Psoas muscle (tissue), 8 donors: ENCODE measurements at regions of chr12 and their contacts with region 1.

Region 1: DNA sequence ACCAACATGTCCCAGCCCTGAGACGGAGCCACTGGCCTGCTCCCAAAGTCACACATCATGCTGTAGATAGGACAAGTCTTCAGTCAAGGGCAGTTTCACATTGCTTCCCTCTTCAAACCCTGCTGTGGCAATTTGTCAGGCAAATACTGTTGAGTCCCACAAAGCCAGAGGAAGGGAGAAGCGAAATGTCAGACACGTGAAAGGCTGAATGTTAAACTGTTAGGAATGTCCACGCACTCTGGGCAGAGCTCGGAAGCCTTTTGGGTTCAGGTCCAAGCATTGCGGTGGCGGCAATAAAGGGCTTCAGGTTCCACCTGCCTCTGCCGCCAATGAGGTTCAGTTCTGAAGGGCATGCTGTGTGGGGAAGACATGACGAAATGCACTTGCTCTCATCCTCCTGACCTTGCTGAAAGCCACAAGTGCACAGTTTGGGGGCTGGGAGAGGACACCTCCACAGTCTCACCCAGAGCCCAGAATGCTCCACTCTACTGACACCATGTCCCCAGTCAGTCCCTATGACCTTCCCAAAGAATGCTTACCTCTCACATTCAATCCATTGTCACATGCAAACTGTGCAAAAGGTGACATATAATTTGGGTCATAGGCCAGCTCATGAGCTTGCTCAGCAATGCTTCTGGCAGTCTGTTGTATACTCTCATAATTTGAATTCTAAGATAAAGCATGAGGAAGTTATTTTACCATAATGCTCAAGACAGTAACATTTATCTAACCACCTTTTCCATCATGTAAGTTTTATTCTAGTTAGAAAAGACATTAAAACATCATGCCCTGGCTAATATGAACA is 35.7 kb downstream of the RAD9B start:
- DNase-seq: peak; percentile 68 to 93
- ATAC-seq: peak; percentile 85 to 88 (median 86)
- H3K4me3 ChIP-seq: peak overlapping the region; percentile 33
- H3K27ac ChIP-seq: peak overlapping the region; percentile 86
- H3K4me1 ChIP-seq: peaks cover 81% of the 10 kb centered on the region
- H3K27me3 ChIP-seq: no peaks in the 10 kb centered on the region
- CTCF ChIP-seq: no peak

Region 2: DNA sequence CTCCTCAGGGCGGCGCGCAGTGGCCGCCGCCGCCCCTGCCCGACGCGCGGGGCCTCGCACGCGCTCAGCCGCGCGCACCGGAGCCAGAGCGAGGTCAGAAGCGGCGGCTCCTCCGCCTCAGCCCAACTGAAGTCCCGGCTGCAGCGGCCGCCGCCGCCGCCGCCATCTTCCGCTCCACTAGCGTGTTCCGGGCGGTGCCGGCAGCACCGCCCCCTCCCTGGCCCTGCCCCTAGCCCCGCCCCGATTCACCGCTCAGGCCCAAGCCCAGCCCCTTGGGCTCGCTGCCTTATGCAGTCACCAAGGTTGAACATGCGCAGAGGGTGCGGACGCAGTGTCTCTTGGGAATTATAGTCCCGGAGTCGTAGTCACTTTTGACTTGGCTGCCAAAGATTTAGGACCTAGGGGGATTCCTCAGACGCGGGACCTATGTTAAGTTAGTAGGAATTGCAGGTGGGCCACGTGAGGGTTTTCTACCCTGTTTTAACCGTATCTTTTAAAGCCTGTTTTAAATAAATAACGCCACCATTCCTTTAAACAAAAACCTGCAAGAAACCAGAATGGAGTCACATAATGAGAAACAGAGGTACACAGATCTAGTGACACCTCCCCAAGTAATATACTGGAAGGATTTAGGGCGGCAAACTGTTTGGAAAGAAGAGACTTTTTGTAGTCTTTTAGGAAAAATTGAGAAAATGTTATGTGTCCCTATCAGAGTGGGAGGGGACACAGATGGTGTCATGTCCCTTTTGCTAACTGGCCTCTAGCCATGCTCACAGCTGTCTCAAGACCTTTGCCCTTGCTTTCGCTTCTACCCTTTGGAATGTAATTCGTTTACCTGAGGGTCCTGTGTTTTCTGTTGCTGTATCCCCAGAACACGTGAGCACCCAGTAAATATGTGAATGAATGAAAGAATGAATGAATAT is 45.6 kb after region 1 on chr12 and contains the start of gene PPTC7:
- intact Hi-C with region 1: loop called (anchors 2 to 5 kb)
- DNase-seq: peak; percentile 97 to 98
- ATAC-seq: peak; percentile 80 to 86 (median 84)
- H3K4me3 ChIP-seq: peak within 1 kb of the TSS; percentile 95
- H3K27ac ChIP-seq: peak within 1 kb of the TSS; percentile 97
- H3K4me1 ChIP-seq: peaks cover 54% of the 10 kb centered on the region
- H3K27me3 ChIP-seq: no peaks in the 10 kb centered on the region
- CTCF ChIP-seq: no peak
- total RNA-seq, gene PPTC7: 61.1 to 213 (median 86.7) TPM